ENCODE measurements at regions of chr11 and their contacts with region 1.

Region 1: GRCh38 chr11:126790550-126791081 is 210.0 kb downstream of the KIRREL3 start:
- DNase-seq: peak in 1 of 2 experiments; percentile 44
- H3K4me3 ChIP-seq: no peak overlapping the region
- H3K27ac ChIP-seq: no peak overlapping the region
- H3K4me1 ChIP-seq: no peaks in the 10 kb centered on the region; a peak in 3 of 7 replicates
- H3K27me3 ChIP-seq: no peaks in the 10 kb centered on the region
- CTCF ChIP-seq: peak; percentile 17 to 47 (median 38); a peak in 3 of 4 replicates
- EP300 ChIP-seq: no peak
- POLR2A ChIP-seq: no peak
- RAD21 ChIP-seq: peak; percentile 48 to 53

Region 2: GRCh38 chr11:126764231-126764630 is 26.4 kb before region 1 on chr11:
- CTCF ChIA-PET with region 1: interaction called, 13 read pairs
- POLR2A ChIA-PET with region 1: no interaction called
- DNase-seq: no peak
- H3K4me3 ChIP-seq: no peak overlapping the region
- H3K27ac ChIP-seq: no peak overlapping the region
- H3K4me1 ChIP-seq: no peaks in the 10 kb centered on the region
- H3K27me3 ChIP-seq: no peaks in the 10 kb centered on the region
- CTCF ChIP-seq: peak in 1 of 3 experiments; percentile 43; a peak in 2 of 4 replicates
- EP300 ChIP-seq: no peak
- POLR2A ChIP-seq: no peak
- RAD21 ChIP-seq: peak; percentile 34 to 51; a peak in 3 of 4 replicates

Region 3: GRCh38 chr11:126776119-126776518 is 14.5 kb before region 1 on chr11:
- CTCF ChIA-PET with region 1: interaction called, 48 read pairs
- POLR2A ChIA-PET with region 1: interaction called, 3 read pairs
- DNase-seq: no peak
- H3K4me3 ChIP-seq: no peak overlapping the region
- H3K27ac ChIP-seq: no peak overlapping the region
- H3K4me1 ChIP-seq: peaks cover 0 to 5% (median 2%) of the 10 kb centered on the region in 4 experiments; a peak in 2 of 7 replicates
- H3K27me3 ChIP-seq: no peaks in the 10 kb centered on the region
- CTCF ChIP-seq: no peak
- EP300 ChIP-seq: no peak
- POLR2A ChIP-seq: no peak
- RAD21 ChIP-seq: no peak

Region 4: DNA sequence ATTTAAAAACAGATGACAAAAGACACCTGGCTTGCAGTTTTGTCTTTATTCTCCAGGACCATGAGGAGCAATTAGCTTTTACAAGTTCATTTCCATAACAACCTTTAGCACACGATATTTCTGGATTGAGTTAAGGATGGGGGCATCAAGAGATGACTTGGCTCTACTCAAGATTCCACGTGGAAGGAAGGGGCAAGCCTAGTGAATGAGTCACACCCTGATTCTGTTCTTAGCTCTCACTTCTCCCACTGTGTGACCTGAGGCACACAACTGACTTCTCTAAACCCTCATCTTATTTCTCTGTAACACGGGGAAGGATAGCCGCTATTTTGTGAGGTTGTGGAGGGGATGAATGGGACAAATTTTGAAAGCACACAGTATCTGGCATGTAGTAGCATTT is 24.5 kb after region 1 on chr11:
- CTCF ChIA-PET with region 1: interaction called, 12 read pairs
- POLR2A ChIA-PET with region 1: no interaction called
- DNase-seq: no peak
- H3K4me3 ChIP-seq: no peak overlapping the region
- H3K27ac ChIP-seq: no peak overlapping the region
- H3K4me1 ChIP-seq: peaks cover 0 to 4% (median under 1%) of the 10 kb centered on the region in 4 experiments; a peak in 1 of 7 replicates
- H3K27me3 ChIP-seq: no peaks in the 10 kb centered on the region
- CTCF ChIP-seq: no peak
- EP300 ChIP-seq: no peak
- POLR2A ChIP-seq: no peak
- RAD21 ChIP-seq: no peak